Dorsolateral prefrontal cortex (tissue), 120 donors: ENCODE measurements at regions of chr16 and their contacts with region 1.

Region 1: GRCh38 chr16:82043680-82044584 is 8.9 kb downstream of the HSD17B2 start:
- DNase-seq: no peak
- H3K4me3 ChIP-seq: no peak overlapping the region
- H3K27ac ChIP-seq: no peak overlapping the region
- H3K27me3 ChIP-seq: peaks cover 0 to 33% (median 3%) of the 10 kb centered on the region in 45 donors
- CTCF ChIP-seq: no peak

Region 2: DNA sequence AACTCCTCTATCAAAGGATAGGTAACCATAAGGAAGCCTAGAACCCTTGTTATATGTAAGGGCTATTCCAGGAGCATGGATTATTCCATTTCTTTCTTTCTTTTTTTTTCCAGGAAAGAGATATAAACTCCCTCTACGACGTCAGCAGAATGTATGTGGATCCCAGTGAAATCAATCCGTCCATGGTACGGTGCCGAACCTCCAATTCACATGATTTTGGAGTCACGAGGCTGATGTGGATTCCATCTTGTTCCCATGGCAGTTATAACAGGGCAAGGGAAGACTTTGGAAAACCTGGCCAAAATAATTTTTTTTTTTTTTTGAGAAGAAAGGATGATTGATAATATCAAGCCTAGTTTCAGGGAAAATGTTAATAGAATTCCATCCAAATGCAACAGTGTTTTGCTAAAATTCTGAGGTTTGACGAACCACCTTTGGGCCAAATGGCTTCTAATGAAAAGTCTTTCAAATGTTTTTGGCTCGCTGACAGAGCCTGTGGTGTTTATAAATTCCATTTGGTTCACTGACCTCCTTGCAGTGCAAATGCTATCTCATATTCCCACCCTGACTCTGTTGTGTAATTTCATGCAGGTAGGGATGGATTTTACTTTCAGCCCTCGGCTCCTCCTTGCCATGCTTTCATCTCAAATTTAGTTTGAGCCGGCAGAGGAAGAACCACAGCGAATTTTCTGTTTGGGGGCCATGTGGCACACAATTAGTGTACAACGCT is 122.7 kb before region 1 on chr16:
- intact Hi-C with region 1: no loop called
- DNase-seq: no peak
- H3K4me3 ChIP-seq: no peak overlapping the region
- H3K27ac ChIP-seq: no peak overlapping the region
- H3K27me3 ChIP-seq: peaks cover 0 to 3% (median 0%) of the 10 kb centered on the region in 45 donors
- CTCF ChIP-seq: no peak

Region 3: DNA sequence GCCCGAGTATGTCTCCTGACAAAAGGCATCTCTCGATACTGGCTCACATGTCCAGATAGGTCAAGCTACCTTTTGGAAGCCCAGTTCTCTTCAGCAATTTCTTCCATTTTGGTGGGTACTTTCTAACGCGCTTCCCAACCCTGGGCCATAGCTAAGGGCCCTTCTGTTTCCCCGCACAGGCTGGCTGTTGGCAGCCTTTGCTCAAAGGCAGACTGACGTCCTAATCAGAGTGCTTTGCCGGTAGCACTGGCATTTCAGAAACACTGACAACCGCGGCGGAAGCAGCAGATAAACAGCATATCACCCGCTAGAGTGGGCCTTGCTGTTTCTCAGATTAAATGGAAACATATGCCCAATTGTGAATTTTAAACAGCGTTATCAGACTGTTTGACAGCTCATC is 175.4 kb after region 1 on chr16:
- intact Hi-C with region 1: loop called in 1 of 2 experiments (anchors 5 kb)
- DNase-seq: no peak
- H3K4me3 ChIP-seq: no peak overlapping the region
- H3K27ac ChIP-seq: no peak overlapping the region
- H3K27me3 ChIP-seq: peaks cover 0 to 10% (median 0%) of the 10 kb centered on the region in 45 donors
- CTCF ChIP-seq: no peak